Activated B cell treated with CpG ODN at 0.5 μM for 24 hours (primary cell): ENCODE measurements at regions of chr19 and their contacts with region 1.

Region 1: DNA sequence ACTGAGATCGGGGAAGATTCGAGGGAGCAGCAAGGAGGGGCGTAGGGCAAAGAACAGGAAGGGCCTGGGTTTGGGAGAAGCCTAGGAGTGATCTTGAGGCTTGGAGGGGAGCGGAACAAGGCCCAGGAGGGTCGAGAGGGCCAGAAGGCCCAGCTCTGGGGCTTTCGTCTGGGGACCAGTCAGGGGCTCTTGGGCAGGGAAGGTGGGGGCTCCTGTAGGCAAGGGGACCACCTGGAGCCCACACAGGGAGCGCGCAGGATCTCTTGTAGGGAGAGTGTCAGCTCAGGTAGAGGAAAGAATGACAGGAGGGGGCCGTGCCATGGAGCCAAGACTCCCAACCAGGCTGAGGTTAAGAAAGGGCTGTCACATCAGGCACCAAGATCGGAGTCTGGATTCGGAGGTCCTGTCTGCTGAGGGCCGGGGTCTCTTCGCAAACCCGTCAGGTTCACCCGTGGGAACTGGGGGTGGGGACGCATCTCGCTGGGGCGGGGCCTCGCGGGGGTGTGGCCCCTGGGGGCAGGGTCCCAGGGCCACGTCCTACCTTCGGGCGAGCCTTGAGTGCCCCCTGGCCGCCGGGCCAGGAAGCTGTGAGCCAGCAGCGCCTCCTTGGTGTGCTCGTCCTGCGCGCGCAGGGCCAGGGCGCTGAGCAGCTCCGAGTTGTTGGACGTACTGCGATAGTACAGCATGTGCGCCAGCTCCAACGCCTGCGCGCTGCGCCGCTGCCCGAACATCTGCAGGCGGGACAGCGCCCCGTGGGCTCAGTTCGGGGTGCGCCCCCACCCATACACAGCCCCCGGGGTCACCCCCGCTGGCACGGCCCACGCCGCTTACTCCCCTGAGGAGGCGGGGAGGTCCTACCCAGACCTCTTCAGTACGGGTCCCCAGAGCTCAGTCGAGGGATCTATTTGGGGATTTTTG is 8.4 kb downstream of the EMP3 start:
- DNase-seq: peak; percentile 90
- ATAC-seq: peak; percentile 66
- H3K4me3 Mint-ChIP-seq: peak overlapping the region; percentile 95
- H3K27ac Mint-ChIP-seq: peak overlapping the region; percentile 93
- H3K4me1 Mint-ChIP-seq: peaks cover 54% of the 10 kb centered on the region
- H3K27me3 Mint-ChIP-seq: no peaks in the 10 kb centered on the region
- CTCF ChIP-seq: no peak

Region 2: GRCh38 chr19:48170038-48170812 is 163.5 kb before region 1 on chr19 and contains the starts of genes LIG1 and ZSWIM9:
- CTCF ChIA-PET with region 1: no interaction called
- POLR2A ChIA-PET with region 1: no interaction called
- intact Hi-C with region 1: loop called (anchors 2 kb)
- DNase-seq: peak; percentile 93
- ATAC-seq: peak; percentile 83
- H3K4me3 Mint-ChIP-seq: peak within 1 kb of the TSS; percentile 100
- H3K27ac Mint-ChIP-seq: peak within 1 kb of the TSS; percentile 99
- H3K4me1 Mint-ChIP-seq: peaks cover 21% of the 10 kb centered on the region
- H3K27me3 Mint-ChIP-seq: no peaks in the 10 kb centered on the region
- CTCF ChIP-seq: no peak
- total RNA-seq, gene LIG1: 41.8 and 42.9 TPM in 2 replicates
- total RNA-seq, gene ZSWIM9: 5.7 and 8.6 TPM in 2 replicates

Region 3: GRCh38 chr19:48290771-48291488 is 42.8 kb before region 1 on chr19:
- CTCF ChIA-PET with region 1: interaction called, 3 read pairs
- POLR2A ChIA-PET with region 1: no interaction called
- intact Hi-C with region 1: loop called (anchors 1 kb)
- DNase-seq: peak; percentile 69
- ATAC-seq: peak; percentile 71
- H3K4me3 Mint-ChIP-seq: peak overlapping the region; percentile 81
- H3K27ac Mint-ChIP-seq: no peak overlapping the region
- H3K4me1 Mint-ChIP-seq: peaks cover 8% of the 10 kb centered on the region
- H3K27me3 Mint-ChIP-seq: no peaks in the 10 kb centered on the region
- CTCF ChIP-seq: peak; percentile 98

Region 4: DNA sequence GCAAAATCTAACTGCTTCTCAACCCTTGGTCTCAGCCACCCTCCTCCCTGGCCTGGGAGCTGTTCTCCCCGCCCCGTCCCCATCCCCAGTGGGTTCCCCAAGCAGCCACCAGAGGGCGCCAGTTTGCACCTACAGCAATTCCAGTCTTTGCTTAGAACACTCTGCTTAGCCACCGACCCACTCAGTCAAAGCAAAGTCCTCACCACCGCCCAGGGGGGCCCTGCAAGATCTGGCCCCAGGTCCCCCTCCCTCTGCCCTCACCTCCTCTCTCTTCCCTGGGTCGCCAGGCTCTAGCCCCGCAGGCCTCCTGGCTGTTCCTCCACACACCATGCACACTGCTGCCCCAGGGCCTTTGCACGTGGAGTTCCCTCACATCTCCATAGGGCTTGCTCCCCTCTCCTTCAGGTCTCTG is 17.6 kb after region 1 on chr19:
- CTCF ChIA-PET with region 1: interaction called, 10 read pairs
- POLR2A ChIA-PET with region 1: interaction called, 4 read pairs
- intact Hi-C with region 1: no loop called
- DNase-seq: peak; percentile 69
- ATAC-seq: peak; percentile 81
- H3K4me3 Mint-ChIP-seq: no peak overlapping the region
- H3K27ac Mint-ChIP-seq: no peak overlapping the region
- H3K4me1 Mint-ChIP-seq: peaks cover 2% of the 10 kb centered on the region
- H3K27me3 Mint-ChIP-seq: no peaks in the 10 kb centered on the region
- CTCF ChIP-seq: no peak

Region 5: DNA sequence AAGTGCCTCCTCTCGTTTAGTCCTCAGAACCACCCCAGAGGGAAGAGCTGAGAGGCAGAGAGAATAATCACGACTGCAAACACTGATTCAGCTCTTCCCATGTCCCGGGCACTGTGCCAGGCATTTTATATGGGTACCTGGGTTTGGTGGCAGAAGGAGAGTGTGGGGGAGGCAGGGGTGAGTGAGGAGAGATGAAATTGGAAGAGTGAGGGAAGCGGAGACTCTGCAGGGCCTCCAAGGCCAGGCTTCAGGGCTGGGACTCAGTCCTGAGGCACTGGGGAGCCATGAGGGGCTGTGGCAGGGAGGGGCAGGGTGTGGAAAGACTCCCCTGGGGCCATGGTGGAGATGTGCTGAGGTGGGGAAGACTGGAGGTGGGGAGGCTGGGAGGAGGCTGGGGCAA is 39.2 kb after region 1 on chr19:
- CTCF ChIA-PET with region 1: no interaction called
- POLR2A ChIA-PET with region 1: no interaction called
- intact Hi-C with region 1: no loop called
- DNase-seq: no peak
- ATAC-seq: no peak
- H3K4me3 Mint-ChIP-seq: no peak overlapping the region
- H3K27ac Mint-ChIP-seq: no peak overlapping the region
- H3K4me1 Mint-ChIP-seq: no peaks in the 10 kb centered on the region
- H3K27me3 Mint-ChIP-seq: peaks cover 2% of the 10 kb centered on the region
- CTCF ChIP-seq: no peak

Region 6: GRCh38 chr19:48400018-48400742 is 66.5 kb after region 1 on chr19:
- CTCF ChIA-PET with region 1: no interaction called
- POLR2A ChIA-PET with region 1: no interaction called
- intact Hi-C with region 1: no loop called
- DNase-seq: peak; percentile 25
- ATAC-seq: peak; percentile 25
- H3K4me3 Mint-ChIP-seq: peak overlapping the region; percentile 12
- H3K27ac Mint-ChIP-seq: no peak overlapping the region
- H3K4me1 Mint-ChIP-seq: peaks cover 35% of the 10 kb centered on the region
- H3K27me3 Mint-ChIP-seq: peaks cover 18% of the 10 kb centered on the region
- CTCF ChIP-seq: no peak

Region 7: DNA sequence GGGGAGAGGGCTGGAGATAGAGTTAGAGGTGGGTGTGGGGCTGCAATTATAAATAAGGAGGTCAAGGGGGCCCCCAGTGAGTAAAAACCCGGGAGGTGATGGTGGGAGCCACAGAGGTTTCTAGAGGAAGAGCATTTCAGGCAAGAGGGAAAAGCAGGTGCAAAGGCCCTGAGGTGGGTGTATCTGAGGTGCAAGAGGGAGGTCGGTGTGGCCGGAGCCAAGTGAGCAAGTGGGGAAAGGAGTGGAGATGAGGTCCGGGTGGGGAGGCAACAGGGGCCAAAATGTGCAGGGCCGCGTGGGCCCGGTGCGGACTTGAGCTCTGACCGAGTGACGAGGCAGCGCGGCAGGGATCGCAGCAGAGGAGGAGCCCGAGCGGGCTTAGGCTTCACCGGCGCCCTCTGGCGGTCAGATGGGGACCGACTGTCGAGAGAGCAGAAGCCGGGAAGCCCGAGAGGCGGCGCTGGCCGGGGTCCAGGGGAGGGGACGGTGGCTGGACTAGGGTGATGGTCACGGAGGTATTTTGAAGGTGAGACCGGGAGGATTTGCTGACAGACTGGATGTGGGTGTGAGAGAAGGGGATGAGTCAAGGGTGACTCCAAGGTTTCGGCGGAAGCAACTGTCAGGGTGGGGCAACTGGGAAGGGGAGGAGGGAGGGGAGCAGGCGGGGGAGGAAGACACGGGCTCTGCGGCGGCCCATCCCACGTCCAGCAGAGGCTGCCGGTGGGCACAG is 255.1 kb after region 1 on chr19:
- CTCF ChIA-PET with region 1: interaction called, 20 read pairs
- POLR2A ChIA-PET with region 1: interaction called, 5 read pairs
- intact Hi-C with region 1: loop called (anchors 5 kb)
- DNase-seq: peak; percentile 84
- ATAC-seq: peak; percentile 93
- H3K4me3 Mint-ChIP-seq: peak overlapping the region; percentile 80
- H3K27ac Mint-ChIP-seq: no peak overlapping the region
- H3K4me1 Mint-ChIP-seq: peaks cover 15% of the 10 kb centered on the region
- H3K27me3 Mint-ChIP-seq: peaks cover 9% of the 10 kb centered on the region
- CTCF ChIP-seq: peak; percentile 58

Region 8: GRCh38 chr19:48720613-48721296 is 387.0 kb after region 1 on chr19:
- CTCF ChIA-PET with region 1: no interaction called
- POLR2A ChIA-PET with region 1: interaction called, 10 read pairs
- intact Hi-C with region 1: no loop called
- DNase-seq: peak; percentile 81
- ATAC-seq: peak; percentile 86
- H3K4me3 Mint-ChIP-seq: peak overlapping the region; percentile 95
- H3K27ac Mint-ChIP-seq: peak overlapping the region; percentile 92
- H3K4me1 Mint-ChIP-seq: peaks cover 24% of the 10 kb centered on the region
- H3K27me3 Mint-ChIP-seq: no peaks in the 10 kb centered on the region
- CTCF ChIP-seq: no peak